Panc1 (cell line): ENCODE measurements at regions of chr12 and their contacts with region 1.

Region 1: GRCh38 chr12:6620137-6620884 is 13.1 kb upstream of the CHD4 start:
- DNase-seq: no peak
- ATAC-seq: no peak
- H3K4me3 ChIP-seq: no peak overlapping the region
- H3K27ac ChIP-seq: no peak overlapping the region
- H3K4me1 ChIP-seq: no peaks in the 10 kb centered on the region
- H3K27me3 ChIP-seq: no peaks in the 10 kb centered on the region
- CTCF ChIP-seq: no peak

Region 2: DNA sequence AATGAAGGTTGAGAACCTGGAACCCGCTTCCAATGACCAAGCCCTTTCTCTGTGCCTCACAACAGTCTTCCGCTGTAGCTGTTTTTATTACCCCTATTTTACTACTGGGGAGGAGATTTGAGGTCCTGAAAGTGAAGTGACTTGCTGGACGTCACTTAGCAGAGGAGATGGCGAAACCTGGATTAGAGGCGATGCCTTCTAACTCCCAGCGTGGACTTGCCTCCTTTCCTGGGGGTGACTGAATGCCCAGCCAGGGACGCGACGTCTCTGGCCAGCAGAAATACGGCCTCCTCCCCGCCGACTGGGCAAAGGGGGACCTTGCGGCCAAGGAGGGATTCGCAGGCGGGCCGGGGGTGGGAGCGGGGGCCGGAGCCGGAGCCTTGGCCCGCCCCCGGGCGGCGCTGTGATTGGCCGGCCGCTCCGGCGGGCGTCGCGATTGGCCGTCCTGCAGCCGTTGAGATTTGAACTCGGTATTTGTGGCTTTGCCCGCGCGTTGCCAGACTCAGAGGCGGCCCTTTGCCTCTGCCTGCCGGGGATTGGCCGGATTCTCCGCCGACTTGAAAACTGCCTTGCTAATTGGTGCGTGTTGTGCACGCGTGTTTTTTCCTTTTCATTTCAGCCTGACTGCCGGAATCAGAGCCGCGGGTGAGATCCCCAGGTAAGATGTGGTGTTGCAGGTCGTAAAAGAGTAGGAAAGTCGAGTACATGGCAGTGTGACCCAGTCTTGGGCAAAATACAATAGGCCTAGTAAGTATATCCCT is 126.6 kb before region 1 on chr12 and contains the start of gene NCAPD2:
- CTCF ChIA-PET with region 1: no interaction called
- POLR2A ChIA-PET with region 1: no interaction called
- in situ Hi-C with region 1: no loop called
- intact Hi-C with region 1: no loop called
- DNase-seq: peak; percentile 68
- ATAC-seq: peak; percentile 93
- H3K4me3 ChIP-seq: peak within 1 kb of the TSS; percentile 94 to 95
- H3K27ac ChIP-seq: peak within 1 kb of the TSS; percentile 98
- H3K4me1 ChIP-seq: peaks cover 17% of the 10 kb centered on the region
- H3K27me3 ChIP-seq: no peaks in the 10 kb centered on the region
- CTCF ChIP-seq: no peak
- total RNA-seq, gene NCAPD2: 80.3 TPM

Region 3: GRCh38 chr12:6697584-6698351 is 77.5 kb after region 1 on chr12:
- CTCF ChIA-PET with region 1: interaction called, 3 read pairs
- POLR2A ChIA-PET with region 1: no interaction called
- in situ Hi-C with region 1: no loop called
- intact Hi-C with region 1: loop called (anchors 2 kb)
- DNase-seq: no peak
- ATAC-seq: peak; percentile 88
- H3K4me3 ChIP-seq: no peak overlapping the region
- H3K27ac ChIP-seq: no peak overlapping the region
- H3K4me1 ChIP-seq: no peaks in the 10 kb centered on the region
- H3K27me3 ChIP-seq: peaks cover 11% of the 10 kb centered on the region
- CTCF ChIP-seq: peak; percentile 80

Region 4: DNA sequence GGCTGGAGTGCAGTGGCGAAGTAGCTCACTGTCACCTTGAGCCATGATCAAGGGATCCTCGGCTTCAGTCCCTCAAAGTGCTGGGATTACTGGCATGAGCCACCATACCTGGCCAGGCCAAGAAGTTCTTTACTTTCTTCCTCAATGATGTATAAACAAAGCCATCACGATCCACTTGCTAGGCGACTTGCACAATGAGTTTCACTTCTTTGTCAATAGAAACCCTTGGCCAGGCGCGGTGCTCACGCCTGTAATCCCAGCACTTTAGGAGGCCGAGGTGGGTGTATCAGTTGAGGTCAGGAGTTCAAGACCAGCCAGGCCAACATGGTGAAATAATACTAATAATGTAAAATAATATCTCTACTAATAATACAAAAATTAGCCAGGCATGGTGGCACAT is 267.1 kb after region 1 on chr12:
- CTCF ChIA-PET with region 1: no interaction called
- POLR2A ChIA-PET with region 1: no interaction called
- in situ Hi-C with region 1: no loop called
- intact Hi-C with region 1: no loop called
- DNase-seq: no peak
- ATAC-seq: no peak
- H3K4me3 ChIP-seq: no peak overlapping the region
- H3K27ac ChIP-seq: no peak overlapping the region
- H3K4me1 ChIP-seq: 0 out of 2 replicates have a peak, but pooled peaks cover 4% of the 10 kb centered on the region
- H3K27me3 ChIP-seq: no peaks in the 10 kb centered on the region
- CTCF ChIP-seq: no peak